Right ventricle myocardium inferior (tissue), 1 donor: ENCODE measurements at regions of chr11 and their contacts with region 1.

Region 1: DNA sequence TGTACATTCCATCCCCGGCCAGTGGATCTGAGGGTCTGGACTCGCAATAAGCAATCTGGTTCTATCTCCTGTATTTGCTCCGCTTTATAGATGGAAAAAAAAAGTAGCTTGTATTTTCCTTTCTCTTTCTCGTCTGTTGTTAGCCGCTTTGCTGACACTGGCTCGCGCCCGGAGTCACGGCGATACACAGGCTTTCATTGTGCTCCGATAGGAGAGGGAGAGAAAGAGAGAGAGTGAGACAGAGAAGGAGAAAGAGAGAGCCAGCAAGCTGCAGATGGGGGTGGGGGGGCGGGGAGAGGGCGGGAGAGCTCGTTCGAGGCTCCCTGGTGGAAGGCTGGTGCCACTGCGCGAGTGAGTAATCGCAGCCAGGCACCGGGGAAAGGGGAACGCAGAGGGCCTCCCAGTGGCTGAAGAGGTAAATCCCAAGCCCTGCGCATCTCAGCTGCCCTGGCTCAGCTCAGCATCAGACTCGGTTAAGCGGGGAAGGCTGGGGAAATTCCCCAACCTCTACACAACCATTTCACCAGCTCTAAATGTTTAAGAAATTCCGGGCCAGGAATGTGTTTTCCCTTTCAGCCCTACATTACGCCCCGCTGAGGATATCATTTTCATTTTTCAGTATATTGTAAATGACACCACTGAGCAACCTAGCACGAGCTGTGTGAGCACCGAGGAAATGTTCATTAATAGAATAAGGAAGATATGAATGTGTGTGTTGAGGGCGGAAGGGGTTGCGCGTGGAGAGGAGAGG is at the start of gene MAML2:
- DNase-seq: peak; percentile 96
- ATAC-seq: peak; percentile 94
- total RNA-seq, gene MAML2: 5.2 TPM

Region 2: DNA sequence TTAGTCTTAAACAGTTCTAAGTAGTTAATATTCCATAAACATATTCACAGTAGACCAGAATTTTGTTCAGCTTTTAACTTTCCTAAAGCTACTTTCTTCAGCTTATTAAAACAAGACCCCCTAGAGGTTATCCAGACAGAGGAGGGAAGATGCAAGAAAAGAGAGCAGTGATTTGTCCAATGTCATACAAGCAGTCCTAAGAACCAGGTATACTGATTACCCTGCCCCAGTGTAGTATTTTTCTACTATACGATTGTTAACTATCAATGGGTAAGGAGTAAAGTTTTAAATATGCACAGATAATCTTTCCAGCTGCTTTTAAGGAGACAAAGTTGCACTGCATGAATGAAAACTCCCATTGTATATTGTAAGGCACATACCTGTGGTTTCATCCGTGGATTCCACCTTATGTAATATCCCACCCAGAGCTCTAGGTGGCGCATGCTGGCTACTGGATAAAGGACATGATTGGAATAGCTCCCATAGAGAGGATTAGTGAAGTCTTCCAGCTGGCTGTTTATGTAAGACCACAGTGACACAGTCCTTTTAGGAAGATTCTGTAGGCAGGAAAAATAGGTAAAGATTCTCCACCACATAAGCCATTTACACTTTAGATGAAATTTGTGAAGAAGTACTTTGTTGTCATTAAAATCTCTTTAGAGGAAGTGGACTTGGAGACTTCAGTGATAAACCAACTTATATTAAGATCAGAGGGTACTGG is 507.2 kb before region 1 on chr11:
- intact Hi-C with region 1: loop called (anchors 2 kb)
- DNase-seq: peak; percentile 72
- ATAC-seq: peak; percentile 93

Region 3: DNA sequence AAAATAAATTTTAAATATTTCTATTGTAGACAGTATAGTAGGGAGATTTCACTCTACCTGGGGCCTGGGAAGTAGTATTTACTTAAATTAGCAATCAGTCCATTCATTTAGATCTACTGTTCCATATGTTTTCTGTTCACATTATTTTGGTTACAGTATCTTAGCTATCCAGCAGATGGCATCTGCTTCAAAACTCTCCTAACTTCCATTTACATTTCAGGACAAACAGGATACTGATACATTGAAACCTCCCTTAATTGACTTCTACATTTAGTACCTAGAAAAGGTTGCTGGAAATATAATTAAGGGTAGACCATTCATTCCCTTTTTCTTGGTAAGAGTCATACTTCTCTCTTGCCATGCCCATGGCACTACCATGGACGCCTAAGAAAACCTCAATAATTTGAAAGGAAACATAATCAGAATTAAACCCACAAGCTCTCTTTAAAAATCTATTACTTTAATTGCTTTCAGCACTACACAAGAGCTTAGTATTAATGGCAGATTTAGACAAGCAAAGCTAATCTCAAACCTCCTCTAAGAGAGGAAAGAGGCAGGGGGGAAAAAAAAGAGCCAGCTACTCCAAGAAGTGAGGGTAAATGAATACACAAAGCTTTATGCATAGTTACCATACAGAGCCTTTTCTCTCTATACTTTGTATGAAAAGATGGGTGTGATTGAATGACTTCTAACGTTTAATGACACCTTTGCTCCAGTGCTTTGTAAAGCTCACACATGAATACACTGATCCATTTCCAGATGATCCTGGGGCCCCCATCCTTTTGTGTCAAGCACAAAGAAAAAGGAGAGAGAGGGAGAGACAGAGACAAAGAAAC is 288.0 kb before region 1 on chr11:
- intact Hi-C with region 1: loop called (anchors 1 kb)
- DNase-seq: no peak
- ATAC-seq: no peak

Region 4: DNA sequence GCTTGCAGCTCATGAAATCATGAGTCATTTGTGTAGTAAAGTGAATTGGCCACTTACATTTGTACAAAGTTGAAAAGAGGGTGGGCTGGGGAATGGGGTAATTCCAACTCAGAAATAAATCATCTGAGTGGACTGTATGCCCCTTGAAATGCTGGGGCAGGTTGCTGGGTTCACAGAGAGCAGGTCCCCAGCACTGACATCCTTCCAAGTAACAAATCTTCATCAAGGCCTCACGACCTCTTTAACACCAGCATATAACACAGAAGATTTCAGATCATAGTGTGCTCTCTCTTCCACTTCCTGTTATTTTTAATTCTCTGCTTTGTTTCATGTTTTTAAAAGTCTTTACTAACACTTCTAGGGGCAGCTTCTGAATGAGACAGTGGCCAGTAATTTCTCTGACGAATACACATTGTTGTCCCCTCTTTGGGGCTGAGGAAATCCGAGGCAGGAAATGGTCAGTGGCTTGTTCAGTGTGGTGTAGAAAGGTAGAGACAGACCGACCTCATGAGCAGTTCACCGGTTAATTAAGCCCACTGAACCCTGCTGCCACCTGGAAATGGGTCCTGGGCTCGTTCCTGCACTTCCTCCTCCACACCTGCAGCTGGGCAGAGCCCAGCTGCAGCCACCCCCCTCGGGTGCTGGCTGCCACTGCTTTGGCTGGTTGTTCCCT is 127.9 kb before region 1 on chr11:
- intact Hi-C with region 1: loop called (anchors 10 kb)
- DNase-seq: no peak
- ATAC-seq: peak; percentile 24

Region 5: DNA sequence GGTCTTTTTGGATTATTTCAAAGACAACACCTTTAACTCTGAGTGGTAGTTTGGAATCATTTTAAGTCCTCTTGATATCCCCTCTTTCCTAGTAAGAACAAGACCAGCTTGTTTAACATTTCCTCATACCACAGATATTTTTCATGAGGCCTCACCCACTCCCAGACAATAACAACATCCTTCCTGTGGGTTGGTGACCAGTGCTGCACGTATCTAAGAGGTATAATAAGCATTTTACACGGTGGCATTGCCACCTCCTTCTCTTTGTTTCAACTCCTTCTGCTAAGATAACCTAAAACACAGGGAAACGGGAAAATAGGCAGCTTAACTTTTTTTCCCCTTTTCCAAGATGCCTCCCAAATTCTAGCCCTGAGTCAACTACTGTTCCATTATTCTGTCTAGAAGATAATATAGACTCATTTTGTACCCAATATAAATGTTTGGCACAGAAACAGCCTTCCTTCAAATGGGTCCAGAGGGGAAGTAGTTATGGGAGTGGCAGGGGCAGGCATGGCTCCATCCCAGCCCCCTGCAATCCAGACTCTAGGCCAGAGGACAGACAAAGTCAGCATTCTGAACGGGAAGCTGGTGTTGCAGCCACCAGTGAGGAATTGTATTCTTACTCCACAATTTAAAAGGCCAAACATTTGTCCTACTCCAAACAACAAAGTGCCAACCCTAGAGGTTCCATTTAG is 28.7 kb before region 1 on chr11:
- intact Hi-C with region 1: loop called (anchors 2 kb)
- DNase-seq: no peak
- ATAC-seq: peak; percentile 56